Right ventricle myocardium superior (tissue), 1 donor: ENCODE measurements at regions of chr17 and their contacts with region 1.

Region 1: GRCh38 chr17:35423761-35424160 is 8.5 kb downstream of the SLFN12 start:
- DNase-seq: no peak
- ATAC-seq: no peak

Region 2: GRCh38 chr17:35127751-35128514 is 295.8 kb before region 1 on chr17:
- intact Hi-C with region 1: no loop called
- DNase-seq: peak; percentile 61
- ATAC-seq: peak; percentile 88

Region 3: GRCh38 chr17:35312790-35313711 is 110.7 kb before region 1 on chr17:
- intact Hi-C with region 1: no loop called
- DNase-seq: peak; percentile 60
- ATAC-seq: peak; percentile 94

Region 4: GRCh38 chr17:35368081-35368830 is 55.5 kb before region 1 on chr17:
- intact Hi-C with region 1: loop called (anchors 10 kb)
- DNase-seq: no peak
- ATAC-seq: peak; percentile 79

Region 5: DNA sequence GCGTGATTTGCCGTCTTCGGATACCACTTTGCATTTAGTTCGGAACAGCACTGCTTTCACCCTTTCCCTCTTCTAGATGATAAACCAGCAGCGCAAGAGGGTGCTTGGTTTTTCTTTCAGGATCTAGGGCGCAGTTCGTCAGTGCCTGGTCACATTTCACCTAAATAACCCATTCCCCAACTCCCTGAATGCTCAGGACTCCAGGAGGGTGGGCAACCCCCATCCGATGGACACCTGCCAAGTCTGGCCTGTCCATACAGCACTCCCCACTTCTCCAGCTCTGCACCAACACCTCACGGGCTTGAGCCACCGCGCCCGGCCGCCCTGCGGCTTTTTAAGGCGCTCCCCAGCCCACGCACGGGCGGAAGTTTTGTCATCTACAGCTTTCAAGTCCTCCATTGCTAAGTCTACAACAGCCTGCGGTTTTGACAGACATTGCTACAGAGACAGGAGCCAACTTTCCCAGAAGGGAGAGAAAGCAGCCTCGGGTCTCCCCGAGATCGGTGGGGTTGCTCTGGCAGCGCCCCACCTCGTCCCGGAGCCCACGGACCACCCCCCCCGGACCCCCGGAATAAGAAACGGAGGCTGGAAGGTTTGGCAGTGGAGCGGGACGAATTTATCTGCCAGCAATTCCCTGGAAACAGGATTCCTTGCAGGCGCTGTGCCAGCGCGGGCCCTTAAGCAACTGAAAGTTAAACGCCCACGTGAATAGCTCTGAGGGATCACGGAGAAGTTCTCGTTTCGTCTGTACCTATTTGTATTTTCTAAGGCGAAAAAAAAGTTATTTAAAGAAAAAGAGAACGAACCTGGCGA is 63.4 kb after region 1 on chr17:
- intact Hi-C with region 1: loop called (anchors 10 kb)
- DNase-seq: peak; percentile 73
- ATAC-seq: peak; percentile 69